Heart left ventricle (tissue), 16 donors: ENCODE measurements at regions of chr2 and their contacts with region 1.

Region 1: GRCh38 chr2:200864176-200864976 is at the start of gene CLK1:
- DNase-seq: peak; percentile 97 to 99 (median 98)
- ATAC-seq: peak; percentile 88 to 95 (median 94)
- H3K4me3 ChIP-seq: peak within 1 kb of the TSS; percentile 67 to 100 (median 96)
- H3K27ac ChIP-seq: peak within 1 kb of the TSS; percentile 98 to 100 (median 100)
- H3K4me1 ChIP-seq: peaks cover 0 to 52% (median 25%) of the 10 kb centered on the region in 12 donors
- H3K27me3 ChIP-seq: no peaks in the 10 kb centered on the region
- CTCF ChIP-seq: no peak
- POLR2A ChIP-seq: peak; percentile 87 to 99
- total RNA-seq, gene CLK1: 28.6 to 59.5 (median 39.0) TPM

Region 2: DNA sequence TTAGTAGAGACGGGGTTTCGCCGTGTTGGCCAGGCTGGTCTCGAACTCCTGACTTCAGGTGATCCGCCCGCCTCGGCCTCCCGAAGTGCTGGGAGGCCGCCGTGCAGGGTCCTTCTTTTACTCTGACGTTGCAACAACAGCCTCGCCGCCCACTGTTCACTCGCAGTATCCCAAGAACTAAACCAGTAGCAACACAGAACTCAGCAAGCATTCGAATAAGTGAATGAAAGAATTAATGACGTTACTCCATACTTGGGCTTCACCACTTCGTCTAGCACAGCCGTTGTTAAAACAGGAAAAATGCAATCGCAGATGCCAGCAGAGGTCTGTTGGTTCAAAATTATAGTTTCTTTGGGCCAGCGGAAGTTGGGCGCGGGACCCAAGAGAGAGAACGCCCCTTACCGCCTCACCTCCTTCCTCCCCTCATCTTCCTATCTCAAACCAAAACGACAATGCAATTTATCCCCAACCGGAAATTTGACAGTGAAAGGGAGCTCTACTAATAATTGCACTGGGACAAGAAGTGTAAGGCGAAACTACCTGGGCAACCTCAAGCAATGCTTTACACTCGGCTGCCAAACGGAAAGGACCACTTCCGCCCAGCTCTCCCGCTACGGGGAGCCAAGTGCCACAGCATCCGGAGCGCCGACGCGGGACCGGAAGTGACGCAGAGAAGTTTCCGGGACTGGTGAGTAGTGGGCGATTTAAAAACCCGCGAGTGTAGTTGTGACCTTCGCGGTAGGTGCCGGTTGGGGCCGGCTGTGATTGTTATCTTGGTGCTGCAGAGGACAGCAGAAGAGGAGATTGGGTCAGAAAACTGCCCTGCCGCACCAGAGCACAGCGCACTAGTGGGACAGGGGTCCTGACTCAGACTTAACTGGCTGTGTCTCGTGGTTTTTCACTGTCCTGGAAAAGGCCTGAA is 24.6 kb after region 1 on chr2 and contains the starts of genes NIF3L1 and PPIL3:
- intact Hi-C with region 1: loop called in 2 of 10 experiments (anchors 1 to 2 kb)
- DNase-seq: peak; percentile 95 to 97 (median 97)
- ATAC-seq: peak; percentile 96 to 98 (median 97)
- H3K4me3 ChIP-seq: peak within 1 kb of the TSS; percentile 57 to 89 (median 72)
- H3K27ac ChIP-seq: peak within 1 kb of the TSS; percentile 65 to 97 (median 92)
- H3K4me1 ChIP-seq: peaks cover 0 to 30% (median 13%) of the 10 kb centered on the region in 12 donors
- H3K27me3 ChIP-seq: no peaks in the 10 kb centered on the region
- CTCF ChIP-seq: no peak
- POLR2A ChIP-seq: peak in 1 of 2 donors; percentile 48
- total RNA-seq, gene NIF3L1: 16.6 to 27.1 (median 21.6) TPM
- total RNA-seq, gene PPIL3: 11.3 to 27.7 (median 22.2) TPM